Naive thymus-derived CD4-positive, alpha-beta T cell (primary cell): ENCODE measurements at regions of chr1 and their contacts with region 1.

Region 1: GRCh38 chr1:154558575-154559465 is at the start of gene UBE2Q1:
- DNase-seq: peak; percentile 92 to 100 (median 100)
- ATAC-seq: peak; percentile 94
- H3K4me3 ChIP-seq: peak within 1 kb of the TSS; percentile 81
- H3K4me3 Mint-ChIP-seq: peak within 1 kb of the TSS; percentile 89 to 98 (median 96)
- H3K27ac ChIP-seq: peak within 1 kb of the TSS; percentile 86
- H3K27ac Mint-ChIP-seq: peak within 1 kb of the TSS; percentile 90 to 97 (median 94)
- H3K4me1 ChIP-seq: peaks cover 18 to 23% of the 10 kb centered on the region in 2 donors
- H3K4me1 Mint-ChIP-seq: peaks cover 12 to 45% (median 39%) of the 10 kb centered on the region in 7 donors
- H3K27me3 ChIP-seq: no peaks in the 10 kb centered on the region
- H3K27me3 Mint-ChIP-seq: peaks cover 0 to 2% (median 0%) of the 10 kb centered on the region in 5 donors
- total RNA-seq, gene UBE2Q1: 63.2 to 117 (median 106) TPM

Region 2: GRCh38 chr1:153922972-153923925 is 635.6 kb before region 1 on chr1 and contains the start of gene GATAD2B:
- CTCF ChIA-PET with region 1: no interaction called
- POLR2A ChIA-PET with region 1: no interaction called
- intact Hi-C with region 1: loop called in 1 of 2 experiments (anchors 1 kb)
- DNase-seq: peak; percentile 86 to 100 (median 99)
- ATAC-seq: peak; percentile 94
- H3K4me3 ChIP-seq: peak within 1 kb of the TSS; percentile 87
- H3K4me3 Mint-ChIP-seq: peak within 1 kb of the TSS; percentile 83 to 96 (median 94)
- H3K27ac ChIP-seq: peak within 1 kb of the TSS; percentile 97
- H3K27ac Mint-ChIP-seq: peak within 1 kb of the TSS; percentile 90 to 99 (median 97)
- H3K4me1 ChIP-seq: peaks cover 35% of the 10 kb centered on the region in 2 donors
- H3K4me1 Mint-ChIP-seq: peaks cover 31 to 53% (median 44%) of the 10 kb centered on the region in 7 donors
- H3K27me3 ChIP-seq: no peaks in the 10 kb centered on the region
- H3K27me3 Mint-ChIP-seq: peaks cover 0 to 3% (median 0%) of the 10 kb centered on the region in 5 donors
- total RNA-seq, gene GATAD2B: 67.3 to 102 (median 75.5) TPM

Region 3: DNA sequence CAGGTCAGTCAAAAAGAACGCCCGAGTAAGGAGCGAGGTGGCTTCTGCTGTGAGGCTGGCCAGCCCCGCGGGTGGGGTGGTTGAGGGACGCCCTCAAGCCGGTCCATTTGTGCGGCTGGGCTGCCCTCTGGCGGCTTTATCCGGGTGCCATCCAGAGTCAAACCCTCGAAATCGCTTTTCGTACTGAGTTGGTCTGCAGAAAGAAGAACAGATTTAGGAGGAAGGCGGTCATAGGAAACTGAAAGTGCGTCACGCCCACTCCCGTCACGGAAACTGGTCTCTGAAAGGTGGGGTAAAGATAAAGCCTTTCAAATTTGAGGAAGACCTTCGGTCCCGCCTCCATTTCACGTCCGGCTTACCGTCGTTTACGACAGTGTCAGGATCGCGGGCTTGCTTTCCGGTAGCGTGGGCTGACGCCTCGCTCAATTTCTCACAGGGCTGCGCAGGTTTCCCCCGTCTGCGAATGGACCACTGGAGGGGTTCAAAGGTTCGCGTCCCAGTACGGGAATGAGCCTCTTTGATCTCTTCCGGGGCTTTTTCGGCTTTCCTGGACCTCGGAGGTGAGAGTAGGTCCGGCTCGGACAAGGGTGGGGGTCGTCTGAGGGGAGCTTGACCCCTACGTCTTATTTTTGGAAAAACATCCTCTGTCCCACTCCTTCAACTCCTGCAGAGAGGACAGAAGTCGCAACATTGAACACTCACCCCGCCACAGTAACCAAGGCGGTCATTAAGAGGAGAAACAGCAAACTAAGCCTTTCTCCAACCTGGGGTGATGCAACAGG is 286.4 kb before region 1 on chr1 and contains the start of gene HAX1:
- CTCF ChIA-PET with region 1: no interaction called
- POLR2A ChIA-PET with region 1: interaction called, 3 read pairs
- intact Hi-C with region 1: loop called (anchors 1 to 2 kb)
- DNase-seq: peak; percentile 74 to 99 (median 97)
- ATAC-seq: peak; percentile 95
- H3K4me3 ChIP-seq: peak within 1 kb of the TSS; percentile 98
- H3K4me3 Mint-ChIP-seq: peak within 1 kb of the TSS; percentile 94 to 99 (median 97)
- H3K27ac ChIP-seq: peak within 1 kb of the TSS; percentile 92
- H3K27ac Mint-ChIP-seq: peak within 1 kb of the TSS; percentile 97 to 99 (median 99)
- H3K4me1 ChIP-seq: peaks cover 10 to 20% of the 10 kb centered on the region in 2 donors
- H3K4me1 Mint-ChIP-seq: peaks cover 20 to 47% (median 42%) of the 10 kb centered on the region in 7 donors
- H3K27me3 ChIP-seq: no peaks in the 10 kb centered on the region
- H3K27me3 Mint-ChIP-seq: no peaks in the 10 kb centered on the region
- total RNA-seq, gene HAX1: 71.9 to 111 (median 104) TPM

Region 4: DNA sequence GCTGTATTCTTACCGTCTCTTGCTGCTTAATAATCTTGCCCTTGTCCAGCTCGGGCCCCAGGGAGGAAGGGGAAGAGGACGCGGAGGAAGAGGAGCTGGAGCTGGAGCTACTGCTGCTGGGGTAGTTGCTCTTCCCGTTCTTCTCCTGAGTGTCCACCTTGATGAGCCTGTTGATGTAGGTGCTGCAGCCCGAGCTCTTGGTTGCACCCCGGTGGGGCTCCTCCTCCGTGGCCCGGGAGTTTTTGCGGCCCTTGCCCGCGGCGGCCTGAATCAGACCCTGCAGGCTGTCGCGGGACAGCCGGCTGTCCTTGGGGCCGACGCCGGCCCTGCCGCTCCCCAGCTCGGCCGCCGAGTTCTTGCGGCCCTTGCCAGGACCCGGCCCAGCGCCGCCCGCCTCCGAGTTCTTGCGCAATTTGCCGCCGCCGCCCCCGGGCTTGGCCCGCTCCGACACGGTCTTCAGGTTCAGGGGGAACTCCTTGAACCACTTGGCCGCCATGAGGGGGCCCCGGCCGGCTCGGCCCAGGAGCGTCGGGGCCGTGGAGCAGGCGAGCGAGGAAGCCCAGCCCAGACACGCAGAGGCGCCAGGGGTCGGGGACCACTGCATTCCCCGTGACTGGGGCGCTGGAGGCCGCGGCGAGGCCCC is 57.3 kb before region 1 on chr1:
- CTCF ChIA-PET with region 1: no interaction called
- POLR2A ChIA-PET with region 1: no interaction called
- intact Hi-C with region 1: no loop called
- DNase-seq: peak in 2 of 9 donors; percentile 7 to 33
- ATAC-seq: peak; percentile 16
- H3K4me3 ChIP-seq: no peak overlapping the region
- H3K4me3 Mint-ChIP-seq: peak overlapping the region in 9 of 10 donors; percentile 27 to 71 (median 65)
- H3K27ac ChIP-seq: no peak overlapping the region
- H3K27ac Mint-ChIP-seq: peak overlapping the region in 1 of 9 donors; percentile 17
- H3K4me1 ChIP-seq: peaks cover 0 to 6% of the 10 kb centered on the region in 2 donors
- H3K4me1 Mint-ChIP-seq: peaks cover 7 to 29% (median 16%) of the 10 kb centered on the region in 7 donors
- H3K27me3 ChIP-seq: peaks cover 4 to 5% of the 10 kb centered on the region in 2 donors
- H3K27me3 Mint-ChIP-seq: peaks cover 26 to 73% (median 42%) of the 10 kb centered on the region in 5 donors

Region 5: GRCh38 chr1:154539507-154540483 is 19.0 kb before region 1 on chr1:
- CTCF ChIA-PET with region 1: no interaction called
- POLR2A ChIA-PET with region 1: no interaction called
- intact Hi-C with region 1: no loop called
- DNase-seq: no peak
- ATAC-seq: no peak
- H3K4me3 ChIP-seq: no peak overlapping the region
- H3K4me3 Mint-ChIP-seq: no peak overlapping the region
- H3K27ac ChIP-seq: no peak overlapping the region
- H3K27ac Mint-ChIP-seq: no peak overlapping the region
- H3K4me1 ChIP-seq: no peaks in the 10 kb centered on the region
- H3K4me1 Mint-ChIP-seq: no peaks in the 10 kb centered on the region
- H3K27me3 ChIP-seq: no peaks in the 10 kb centered on the region
- H3K27me3 Mint-ChIP-seq: peaks cover 0 to 37% (median 4%) of the 10 kb centered on the region in 5 donors

Region 6: DNA sequence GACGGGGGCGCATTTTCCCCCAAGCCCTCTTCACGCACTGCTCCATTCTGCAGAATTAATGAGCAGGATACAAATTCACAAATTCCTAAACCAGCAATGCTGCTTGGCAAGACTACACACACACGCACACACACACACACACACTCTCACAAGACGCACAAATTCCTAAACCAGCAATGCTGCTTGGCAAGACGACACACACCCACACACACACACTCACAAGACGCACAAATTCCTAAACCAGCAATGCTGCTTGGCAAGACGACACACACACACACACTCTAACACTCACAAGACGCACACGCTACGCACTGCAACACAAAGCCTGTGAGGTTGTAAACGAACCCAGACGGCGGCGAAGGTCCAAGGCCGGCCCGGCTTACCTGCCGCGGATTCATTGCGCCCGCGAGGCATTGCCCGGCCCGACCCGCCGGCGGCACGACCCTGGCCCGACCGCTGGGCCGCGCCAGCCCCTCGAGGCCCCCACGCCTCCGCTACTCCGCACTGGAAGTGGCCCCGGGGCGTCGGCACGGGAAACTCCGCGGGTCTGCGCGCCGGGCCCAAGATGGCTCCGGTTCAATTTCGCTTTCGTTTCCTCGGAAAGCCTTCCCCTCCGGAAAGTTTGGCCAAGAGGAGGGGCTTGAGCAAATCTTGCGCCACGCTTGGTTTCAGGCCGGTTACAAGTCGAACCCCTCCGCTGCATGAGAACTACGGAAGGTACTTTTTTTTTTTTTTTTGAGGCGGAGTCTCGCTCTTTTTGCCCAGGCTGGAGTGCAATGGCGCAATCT is 49.0 kb after region 1 on chr1 and contains the start of gene ADAR:
- CTCF ChIA-PET with region 1: interaction called, 7 read pairs
- POLR2A ChIA-PET with region 1: interaction called, 6 read pairs
- intact Hi-C with region 1: loop called (anchors 1 kb)
- DNase-seq: peak; percentile 67 to 95 (median 90)
- ATAC-seq: peak; percentile 92
- H3K4me3 ChIP-seq: peak within 1 kb of the TSS; percentile 78
- H3K4me3 Mint-ChIP-seq: peak within 1 kb of the TSS; percentile 91 to 100 (median 98)
- H3K27ac ChIP-seq: peak within 1 kb of the TSS; percentile 97
- H3K27ac Mint-ChIP-seq: peak within 1 kb of the TSS; percentile 94 to 99 (median 99)
- H3K4me1 ChIP-seq: peaks cover 40 to 42% of the 10 kb centered on the region in 2 donors
- H3K4me1 Mint-ChIP-seq: peaks cover 63 to 90% (median 75%) of the 10 kb centered on the region in 7 donors
- H3K27me3 ChIP-seq: no peaks in the 10 kb centered on the region
- H3K27me3 Mint-ChIP-seq: no peaks in the 10 kb centered on the region
- total RNA-seq, gene ADAR: 206 to 408 (median 237) TPM

Region 7: DNA sequence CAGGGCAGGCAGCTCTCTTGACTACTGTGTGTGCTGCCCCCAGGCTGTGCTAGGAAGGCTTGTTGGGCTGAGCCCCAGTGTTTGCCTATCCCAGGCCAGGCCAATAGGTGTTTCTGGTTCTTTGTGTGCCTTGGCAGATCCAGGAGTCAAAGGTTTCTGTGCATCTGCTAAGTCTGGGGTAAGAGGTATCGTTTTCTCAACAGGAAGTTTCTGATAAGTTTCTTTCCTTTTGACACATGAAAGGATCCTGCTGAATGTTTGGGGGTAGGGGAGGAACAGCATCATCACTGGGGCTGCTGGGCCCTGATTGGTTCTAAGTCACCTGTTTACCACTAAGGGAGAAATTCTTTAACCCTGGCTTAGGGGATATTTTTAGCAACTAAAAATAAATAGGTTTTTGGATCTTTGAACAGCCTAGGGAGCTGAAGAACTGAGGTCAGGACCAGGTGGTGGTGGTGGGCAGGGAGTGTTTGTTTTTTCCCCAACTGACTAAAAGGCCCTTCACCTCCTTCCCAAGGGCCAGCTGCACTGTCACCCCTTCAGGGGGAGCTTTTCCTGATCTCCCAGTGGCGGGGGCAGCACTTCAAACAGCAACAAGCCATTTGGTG is 226.2 kb after region 1 on chr1:
- CTCF ChIA-PET with region 1: no interaction called
- POLR2A ChIA-PET with region 1: no interaction called
- intact Hi-C with region 1: loop called in 1 of 2 experiments (anchors 1 kb)
- DNase-seq: peak in 8 of 9 donors; percentile 37 to 87 (median 84)
- ATAC-seq: peak; percentile 94
- H3K4me3 ChIP-seq: peak overlapping the region; percentile 16
- H3K4me3 Mint-ChIP-seq: peak overlapping the region; percentile 45 to 84 (median 69)
- H3K27ac ChIP-seq: peak overlapping the region; percentile 78
- H3K27ac Mint-ChIP-seq: peak overlapping the region; percentile 94 to 99 (median 98)
- H3K4me1 ChIP-seq: peaks cover 15 to 33% of the 10 kb centered on the region in 2 donors
- H3K4me1 Mint-ChIP-seq: peaks cover 25 to 73% (median 54%) of the 10 kb centered on the region in 7 donors
- H3K27me3 ChIP-seq: no peaks in the 10 kb centered on the region
- H3K27me3 Mint-ChIP-seq: no peaks in the 10 kb centered on the region

Region 8: DNA sequence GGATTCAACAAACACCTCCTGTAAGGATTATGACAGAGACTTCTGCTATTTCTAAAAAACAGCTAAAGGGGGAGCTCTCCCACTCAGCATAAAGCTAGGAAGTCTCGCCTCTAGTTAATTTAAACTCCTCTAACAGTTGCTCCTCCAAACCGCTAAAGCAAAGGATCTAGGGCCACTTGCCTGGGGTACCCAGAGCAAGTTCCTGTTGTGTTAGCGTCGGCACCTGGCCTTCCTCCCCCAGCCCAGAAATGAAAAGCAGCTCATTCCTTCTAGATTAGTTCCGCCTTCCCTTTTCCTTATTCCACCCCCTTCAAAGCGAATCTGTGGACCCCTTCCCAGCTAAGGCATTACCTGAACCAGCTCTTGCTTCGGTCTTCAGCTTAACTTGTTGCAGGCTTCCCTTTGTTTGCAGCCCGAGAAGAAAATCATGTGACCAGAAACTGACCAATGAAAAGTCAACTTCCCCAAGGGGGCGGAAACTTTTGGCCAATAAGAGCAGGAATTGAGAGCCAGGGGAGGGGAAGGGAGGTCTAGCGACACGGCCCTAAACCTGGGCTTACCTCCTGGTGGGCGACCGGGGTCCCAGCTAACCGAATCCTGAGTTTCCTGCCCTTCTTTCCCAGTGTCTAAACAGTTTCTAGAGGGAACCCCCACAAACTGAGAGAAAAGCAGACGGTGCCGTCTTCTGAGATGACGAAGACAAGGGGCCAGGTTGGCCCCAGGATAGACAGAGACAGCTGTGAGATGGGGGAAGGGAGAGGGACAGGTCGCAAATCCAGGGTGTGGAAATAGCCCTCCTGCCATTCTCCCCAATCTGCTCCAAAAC is 397.1 kb after region 1 on chr1 and contains the start of gene PBXIP1:
- CTCF ChIA-PET with region 1: interaction called, 5 read pairs
- POLR2A ChIA-PET with region 1: interaction called, 3 read pairs
- intact Hi-C with region 1: loop called (anchors 1 to 2 kb)
- DNase-seq: peak; percentile 56 to 95 (median 92)
- ATAC-seq: peak; percentile 58
- H3K4me3 ChIP-seq: peak within 1 kb of the TSS; percentile 92
- H3K4me3 Mint-ChIP-seq: peak within 1 kb of the TSS; percentile 92 to 99 (median 98)
- H3K27ac ChIP-seq: peak within 1 kb of the TSS; percentile 96
- H3K27ac Mint-ChIP-seq: peak within 1 kb of the TSS; percentile 97 to 100 (median 99)
- H3K4me1 ChIP-seq: peaks cover 53 to 54% of the 10 kb centered on the region in 2 donors
- H3K4me1 Mint-ChIP-seq: peaks cover 59 to 87% (median 76%) of the 10 kb centered on the region in 7 donors
- H3K27me3 ChIP-seq: no peaks in the 10 kb centered on the region
- H3K27me3 Mint-ChIP-seq: no peaks in the 10 kb centered on the region
- total RNA-seq, gene PBXIP1: 107 to 390 (median 383) TPM

Region 9: GRCh38 chr1:155084722-155085503 is 526.1 kb after region 1 on chr1:
- CTCF ChIA-PET with region 1: interaction called, 6 read pairs
- POLR2A ChIA-PET with region 1: interaction called, 4 read pairs
- intact Hi-C with region 1: loop called (anchors 1 kb)
- DNase-seq: peak; percentile 87 to 96 (median 93)
- ATAC-seq: peak; percentile 86
- H3K4me3 ChIP-seq: peak overlapping the region; percentile 97
- H3K4me3 Mint-ChIP-seq: peak overlapping the region; percentile 88 to 100 (median 94)
- H3K27ac ChIP-seq: peak overlapping the region; percentile 63
- H3K27ac Mint-ChIP-seq: peak overlapping the region; percentile 88 to 98 (median 93)
- H3K4me1 ChIP-seq: peaks cover 51 to 53% of the 10 kb centered on the region in 2 donors
- H3K4me1 Mint-ChIP-seq: peaks cover 24 to 43% (median 41%) of the 10 kb centered on the region in 7 donors
- H3K27me3 ChIP-seq: peaks cover 28 to 31% of the 10 kb centered on the region in 2 donors
- H3K27me3 Mint-ChIP-seq: peaks cover 17 to 41% (median 23%) of the 10 kb centered on the region in 5 donors

Region 10: GRCh38 chr1:156129706-156130581 is 1571.1 kb after region 1 on chr1:
- CTCF ChIA-PET with region 1: no interaction called
- POLR2A ChIA-PET with region 1: no interaction called
- intact Hi-C with region 1: no loop called
- DNase-seq: peak; percentile 55 to 83 (median 65)
- ATAC-seq: peak; percentile 40
- H3K4me3 ChIP-seq: no peak overlapping the region
- H3K4me3 Mint-ChIP-seq: peak overlapping the region in 4 of 10 donors; percentile 21 to 49 (median 26)
- H3K27ac ChIP-seq: no peak overlapping the region
- H3K27ac Mint-ChIP-seq: peak overlapping the region in 6 of 9 donors; percentile 41 to 87 (median 67)
- H3K4me1 ChIP-seq: peaks cover 34 to 42% of the 10 kb centered on the region in 2 donors
- H3K4me1 Mint-ChIP-seq: peaks cover 24 to 52% (median 48%) of the 10 kb centered on the region in 7 donors
- H3K27me3 ChIP-seq: no peaks in the 10 kb centered on the region
- H3K27me3 Mint-ChIP-seq: peaks cover 0 to 25% (median 0%) of the 10 kb centered on the region in 5 donors